ENCODE measurements at regions of chr2 and their contacts with region 1.

Region 1: DNA sequence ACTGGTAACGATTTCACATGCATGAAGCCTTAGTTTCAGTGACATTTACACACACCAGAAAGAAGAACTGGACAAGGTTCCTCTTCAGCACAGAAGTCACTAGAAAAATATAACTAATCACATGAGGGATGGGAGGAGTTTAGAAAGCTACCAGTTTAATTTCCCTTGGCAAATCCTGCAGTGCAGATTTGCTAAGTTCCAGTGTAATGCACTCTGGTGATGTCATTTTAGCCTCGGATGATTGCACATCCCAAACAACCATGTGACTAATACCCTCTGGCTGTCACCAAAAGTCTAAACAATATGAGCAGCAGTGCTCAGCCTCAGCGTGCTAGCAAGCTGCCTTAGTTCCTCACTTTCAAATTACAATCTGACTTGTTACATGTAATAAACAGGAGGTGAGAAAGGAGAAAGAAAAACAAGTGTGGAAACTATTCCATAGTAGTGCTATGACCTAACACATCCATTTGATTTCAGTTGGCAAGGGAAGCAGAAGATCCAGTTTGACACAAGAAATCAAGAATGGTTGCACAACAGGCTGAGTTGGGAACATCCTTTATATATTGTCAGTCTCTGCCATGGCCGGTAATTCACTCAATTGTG is 35.3 kb upstream of the PPP1CB start:
- DNase-seq: peak; percentile 60 to 96
- H3K4me3 ChIP-seq: peak overlapping the region; percentile 39; the same call in 1 of the 2 replicates
- H3K27ac ChIP-seq: peak overlapping the region; percentile 90
- H3K4me1 ChIP-seq: peaks cover 69% of the 10 kb centered on the region
- H3K27me3 ChIP-seq: no peaks in the 10 kb centered on the region
- CTCF ChIP-seq: no peak

Region 2: GRCh38 chr2:28413142-28413898 is 303.0 kb before region 1 on chr2:
- CTCF ChIA-PET with region 1: interaction called, 14 read pairs
- POLR2A ChIA-PET with region 1: no interaction called
- intact Hi-C with region 1: no loop called
- DNase-seq: peak in 1 of 2 experiments; percentile 17
- H3K4me3 ChIP-seq: no peak overlapping the region
- H3K27ac ChIP-seq: no peak overlapping the region
- H3K4me1 ChIP-seq: no peaks in the 10 kb centered on the region
- H3K27me3 ChIP-seq: no peaks in the 10 kb centered on the region
- CTCF ChIP-seq: no peak; the same call in 1 of the 2 replicates

Region 3: DNA sequence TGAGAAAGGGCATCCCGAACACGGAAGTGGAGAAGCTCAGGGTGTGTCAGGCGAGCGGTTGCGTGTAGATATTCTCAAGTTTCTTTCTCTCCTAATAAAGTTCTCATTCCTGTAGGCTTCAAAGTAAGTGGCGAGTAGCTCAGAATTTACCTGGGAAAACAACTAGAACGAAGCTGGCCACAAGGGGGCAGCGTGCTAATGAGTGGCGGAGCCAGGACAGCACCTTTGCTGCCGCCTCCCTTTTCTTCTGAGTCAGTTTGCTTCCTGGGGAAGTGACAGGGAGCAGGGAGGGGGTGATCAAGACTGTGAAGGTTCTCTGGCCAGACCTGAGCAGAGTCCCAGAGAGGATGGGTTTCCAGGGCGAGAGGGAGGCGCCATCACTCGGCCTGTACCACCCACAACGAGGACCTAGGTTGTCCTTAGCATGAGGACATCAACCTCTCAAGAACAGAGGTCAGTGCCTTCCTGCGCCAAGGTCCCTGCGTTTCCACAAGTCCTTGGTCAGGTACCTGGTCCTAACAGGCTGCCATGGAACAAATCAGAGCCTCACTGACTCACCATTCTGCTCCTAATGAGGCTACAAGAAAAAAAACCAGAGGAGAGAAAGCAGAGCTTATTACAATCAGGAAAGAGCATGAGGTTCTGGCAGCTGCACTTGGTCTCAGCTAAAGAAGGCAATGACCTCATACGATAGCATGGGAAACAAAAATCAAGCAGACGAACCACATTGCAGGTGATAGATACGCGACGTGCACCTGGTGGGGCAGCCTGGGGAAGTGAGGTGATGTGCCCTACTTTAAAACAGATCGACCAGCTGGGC is 121.9 kb before region 1 on chr2:
- CTCF ChIA-PET with region 1: interaction called, 4 read pairs
- POLR2A ChIA-PET with region 1: interaction called, 3 read pairs
- intact Hi-C with region 1: loop called (anchors 1 kb)
- DNase-seq: peak; percentile 94 to 95
- H3K4me3 ChIP-seq: no peak overlapping the region; the same call in 1 of the 2 replicates
- H3K27ac ChIP-seq: peak overlapping the region; percentile 69
- H3K4me1 ChIP-seq: peaks cover 40% of the 10 kb centered on the region
- H3K27me3 ChIP-seq: no peaks in the 10 kb centered on the region
- CTCF ChIP-seq: peak; percentile 91

Region 4: GRCh38 chr2:28649481-28650214 is 66.7 kb before region 1 on chr2:
- CTCF ChIA-PET with region 1: no interaction called
- POLR2A ChIA-PET with region 1: interaction called, 8 read pairs
- intact Hi-C with region 1: loop called (anchors 2 kb)
- DNase-seq: peak; percentile 74 to 93
- H3K4me3 ChIP-seq: peak overlapping the region; percentile 7; the same call in 1 of the 2 replicates
- H3K27ac ChIP-seq: peak overlapping the region; percentile 87
- H3K4me1 ChIP-seq: peaks cover 61% of the 10 kb centered on the region
- H3K27me3 ChIP-seq: no peaks in the 10 kb centered on the region
- CTCF ChIP-seq: no peak

Region 5: GRCh38 chr2:28661589-28662001 is 54.8 kb before region 1 on chr2:
- CTCF ChIA-PET with region 1: no interaction called
- POLR2A ChIA-PET with region 1: no interaction called
- intact Hi-C with region 1: loop called (anchors 5 kb)
- DNase-seq: peak; percentile 58 to 75
- H3K4me3 ChIP-seq: no peak overlapping the region
- H3K27ac ChIP-seq: peak overlapping the region; percentile 73
- H3K4me1 ChIP-seq: peaks cover 72% of the 10 kb centered on the region
- H3K27me3 ChIP-seq: no peaks in the 10 kb centered on the region
- CTCF ChIP-seq: no peak

Region 6: GRCh38 chr2:28683100-28683706 is 33.2 kb before region 1 on chr2:
- CTCF ChIA-PET with region 1: no interaction called
- POLR2A ChIA-PET with region 1: no interaction called
- intact Hi-C with region 1: loop called (anchors 2 kb)
- DNase-seq: peak; percentile 77 to 84
- H3K4me3 ChIP-seq: no peak overlapping the region
- H3K27ac ChIP-seq: 0 out of 2 replicates have a peak overlapping the region, but pooled peaks have one; percentile 2
- H3K4me1 ChIP-seq: peaks cover 35% of the 10 kb centered on the region
- H3K27me3 ChIP-seq: no peaks in the 10 kb centered on the region
- CTCF ChIP-seq: no peak

Region 7: DNA sequence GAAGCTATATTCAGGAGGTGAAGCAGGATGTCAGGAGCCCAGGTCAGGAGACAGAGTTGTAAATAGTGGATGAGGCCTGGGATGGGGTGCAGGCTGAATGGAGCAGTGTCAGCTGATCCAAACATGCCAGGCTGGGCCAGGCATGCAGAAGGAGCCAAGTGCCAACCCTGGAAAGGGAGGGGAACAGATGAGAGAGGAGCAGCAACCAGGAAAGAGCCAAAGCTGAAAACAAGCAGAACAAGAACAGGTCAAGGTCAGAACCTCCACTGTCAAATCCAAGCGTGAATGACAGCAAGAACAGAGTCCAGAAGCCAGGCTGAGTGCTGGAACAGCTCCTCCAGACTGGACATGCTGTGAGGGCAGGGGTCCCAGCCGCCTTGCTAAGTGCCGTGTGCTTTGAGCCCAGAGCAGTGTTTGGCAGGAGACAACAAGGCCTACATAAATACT is 13.9 kb before region 1 on chr2:
- CTCF ChIA-PET with region 1: no interaction called
- POLR2A ChIA-PET with region 1: no interaction called
- intact Hi-C with region 1: no loop called
- DNase-seq: no peak
- H3K4me3 ChIP-seq: no peak overlapping the region
- H3K27ac ChIP-seq: no peak overlapping the region
- H3K4me1 ChIP-seq: no peaks in the 10 kb centered on the region
- H3K27me3 ChIP-seq: no peaks in the 10 kb centered on the region
- CTCF ChIP-seq: no peak

Region 8: GRCh38 chr2:29212009-29212408 is 495.6 kb after region 1 on chr2:
- CTCF ChIA-PET with region 1: no interaction called
- POLR2A ChIA-PET with region 1: no interaction called
- intact Hi-C with region 1: no loop called
- DNase-seq: no peak
- H3K4me3 ChIP-seq: no peak overlapping the region
- H3K27ac ChIP-seq: no peak overlapping the region
- H3K4me1 ChIP-seq: no peaks in the 10 kb centered on the region
- H3K27me3 ChIP-seq: no peaks in the 10 kb centered on the region
- CTCF ChIP-seq: no peak